ENCODE measurements at regions of chr1 and their contacts with region 1.

Region 1: DNA sequence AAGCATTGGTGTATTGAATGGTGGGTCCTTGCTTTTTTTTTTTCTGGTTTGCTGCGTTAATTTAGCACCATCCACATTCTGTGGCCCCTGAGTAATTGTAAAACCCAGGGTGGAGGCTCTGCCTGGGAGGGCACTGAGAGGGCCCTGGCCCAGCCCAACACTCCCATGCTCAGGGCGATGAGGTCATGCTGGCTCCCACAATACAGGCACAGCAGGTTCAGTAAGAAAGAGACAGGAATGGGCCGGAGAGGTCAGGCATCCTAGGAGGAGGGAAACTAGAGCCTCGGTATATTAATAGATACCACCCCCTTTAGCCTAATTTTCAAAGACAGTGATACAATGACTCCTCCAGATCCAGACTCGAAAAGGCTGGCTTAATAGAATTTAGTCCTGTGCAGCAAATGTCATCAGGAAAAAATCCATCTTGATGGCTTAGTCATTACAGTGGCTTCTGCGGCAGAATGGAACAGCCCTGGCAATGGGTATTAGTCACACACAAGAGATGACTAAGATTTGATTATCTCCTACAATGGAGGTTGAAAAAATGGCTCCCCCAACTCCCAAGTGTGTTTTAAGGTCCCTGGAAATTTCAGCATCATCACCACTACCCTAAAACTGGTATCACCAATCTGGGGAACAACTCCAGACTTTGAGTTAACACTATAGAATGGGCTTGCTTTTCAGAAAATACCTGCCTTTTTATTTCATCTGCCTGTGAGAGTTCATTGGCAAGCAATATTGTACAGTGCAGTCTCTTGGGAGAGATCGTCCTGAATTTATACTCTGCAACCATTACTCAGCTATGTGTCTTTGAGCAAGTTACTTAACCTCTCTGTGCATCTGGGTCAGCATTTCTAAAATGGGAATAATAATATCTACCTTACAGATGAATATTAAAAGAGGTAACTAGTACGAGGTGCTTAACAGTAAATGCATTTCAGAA is 43.9 kb upstream of the LYST start:
- DNase-seq: peak; percentile 97
- H3K4me3 Mint-ChIP-seq: peak overlapping the region; percentile 22
- H3K27ac Mint-ChIP-seq: peak overlapping the region; percentile 99
- H3K4me1 Mint-ChIP-seq: peaks cover 55% of the 10 kb centered on the region
- H3K27me3 Mint-ChIP-seq: no peaks in the 10 kb centered on the region
- CTCF ChIP-seq: no peak

Region 2: GRCh38 chr1:235946571-235946981 is 35.9 kb after region 1 on chr1:
- CTCF ChIA-PET with region 1: interaction called, 58 read pairs
- POLR2A ChIA-PET with region 1: interaction called, 8 read pairs
- intact Hi-C with region 1: loop called (anchors 1 kb)
- DNase-seq: peak; percentile 77
- H3K4me3 Mint-ChIP-seq: no peak overlapping the region
- H3K27ac Mint-ChIP-seq: no peak overlapping the region
- H3K4me1 Mint-ChIP-seq: peaks cover 47% of the 10 kb centered on the region
- H3K27me3 Mint-ChIP-seq: no peaks in the 10 kb centered on the region
- CTCF ChIP-seq: peak; percentile 75